GM12878 (cell line): ENCODE measurements at regions of chr12 and their contacts with region 1.

Region 1: GRCh38 chr12:92408072-92408900 is 262.6 kb upstream of the BTG1 start:
- DNase-seq: no peak
- ATAC-seq: peak; percentile 74
- H3K4me3 ChIP-seq: no peak overlapping the region
- H3K27ac ChIP-seq: peak overlapping the region; percentile 24
- H3K4me1 ChIP-seq: peaks cover 31% of the 10 kb centered on the region
- H3K27me3 ChIP-seq: no peaks in the 10 kb centered on the region
- CTCF ChIP-seq: peak; percentile 58 to 82 (median 72)
- EP300 ChIP-seq: no peak
- POLR2A ChIP-seq: no peak
- RAD21 ChIP-seq: peak; percentile 94

Region 2: GRCh38 chr12:91991399-91992187 is 416.7 kb before region 1 on chr12:
- CTCF ChIA-PET with region 1: interaction called, 3 read pairs
- POLR2A ChIA-PET with region 1: no interaction called
- RAD21 ChIA-PET with region 1: no interaction called
- SMC1A ChIA-PET with region 1: interaction called, 17 read pairs
- in situ Hi-C with region 1: no loop called
- intact Hi-C with region 1: no loop called
- DNase-seq: peak; percentile 32
- ATAC-seq: peak; percentile 94
- H3K4me3 ChIP-seq: no peak overlapping the region
- H3K27ac ChIP-seq: no peak overlapping the region
- H3K4me1 ChIP-seq: no peaks in the 10 kb centered on the region
- H3K27me3 ChIP-seq: no peaks in the 10 kb centered on the region
- CTCF ChIP-seq: peak in 2 of 3 experiments; percentile 35 to 56; a peak in 3 of 6 replicates
- EP300 ChIP-seq: no peak
- POLR2A ChIP-seq: no peak
- RAD21 ChIP-seq: peak; percentile 61

Region 3: DNA sequence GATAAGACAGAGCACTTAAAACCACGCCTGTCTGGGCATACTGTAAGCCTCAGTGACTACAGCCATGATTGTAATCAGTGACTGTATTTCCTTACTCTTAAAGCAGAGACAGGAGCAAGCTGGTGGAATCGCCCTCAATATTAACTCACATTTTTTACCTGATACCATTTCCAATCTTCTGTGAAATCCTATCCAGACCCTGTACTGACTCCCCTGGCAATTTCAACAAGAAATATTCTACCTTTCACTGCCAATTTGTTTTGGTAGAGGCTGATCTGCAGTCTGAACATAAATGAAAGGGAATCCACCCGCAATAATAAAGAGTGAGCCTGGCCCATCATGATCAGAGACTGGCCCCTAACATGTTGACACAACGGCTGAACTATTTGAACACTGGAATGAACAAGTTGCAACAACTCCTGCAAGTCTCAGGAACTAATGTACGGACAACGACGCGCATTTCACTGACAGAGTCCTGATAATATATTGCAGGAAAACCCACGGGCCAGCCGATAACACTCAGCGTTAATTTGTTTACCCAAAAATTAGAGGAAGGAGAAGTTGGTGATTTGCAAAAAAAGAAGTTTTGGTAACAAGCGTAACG is 67.1 kb before region 1 on chr12:
- CTCF ChIA-PET with region 1: no interaction called
- POLR2A ChIA-PET with region 1: no interaction called
- RAD21 ChIA-PET with region 1: no interaction called
- SMC1A ChIA-PET with region 1: interaction called, 12 read pairs
- in situ Hi-C with region 1: no loop called
- intact Hi-C with region 1: no loop called
- DNase-seq: no peak
- ATAC-seq: peak; percentile 86
- H3K4me3 ChIP-seq: peak overlapping the region; percentile 46; the same call in 1 of the 2 replicates
- H3K27ac ChIP-seq: no peak overlapping the region
- H3K4me1 ChIP-seq: no peaks in the 10 kb centered on the region
- H3K27me3 ChIP-seq: no peaks in the 10 kb centered on the region
- CTCF ChIP-seq: no peak
- EP300 ChIP-seq: no peak
- POLR2A ChIP-seq: no peak
- RAD21 ChIP-seq: no peak

Region 4: DNA sequence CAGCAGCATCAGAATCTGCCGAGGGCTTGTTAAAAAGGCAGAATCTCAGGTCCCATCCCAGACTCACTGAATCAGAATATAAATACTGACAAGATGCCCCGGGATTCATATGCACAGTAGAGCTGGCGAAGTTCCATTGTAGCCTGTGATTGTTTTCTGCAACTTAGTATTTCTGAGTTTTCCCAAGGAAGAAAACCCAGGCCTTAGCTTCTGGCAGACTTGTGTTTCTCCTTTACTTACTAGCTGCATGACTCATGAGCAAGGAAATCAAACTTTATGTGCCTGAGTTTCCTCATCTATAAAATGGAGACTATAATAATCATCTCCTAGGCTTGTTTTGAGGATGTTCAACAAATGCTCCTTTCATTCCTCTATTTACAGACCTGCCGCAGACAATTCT is 16.1 kb after region 1 on chr12:
- CTCF ChIA-PET with region 1: interaction called, 53 read pairs
- POLR2A ChIA-PET with region 1: interaction called, 4 read pairs
- RAD21 ChIA-PET with region 1: interaction called, 37 read pairs
- SMC1A ChIA-PET with region 1: interaction called, 145 read pairs
- in situ Hi-C with region 1: no loop called
- intact Hi-C with region 1: no loop called
- DNase-seq: no peak
- ATAC-seq: no peak
- H3K4me3 ChIP-seq: no peak overlapping the region
- H3K27ac ChIP-seq: no peak overlapping the region
- H3K4me1 ChIP-seq: peaks cover 17% of the 10 kb centered on the region; the same call in 1 of the 2 replicates
- H3K27me3 ChIP-seq: no peaks in the 10 kb centered on the region
- CTCF ChIP-seq: no peak
- EP300 ChIP-seq: no peak
- POLR2A ChIP-seq: no peak
- RAD21 ChIP-seq: no peak

Region 5: DNA sequence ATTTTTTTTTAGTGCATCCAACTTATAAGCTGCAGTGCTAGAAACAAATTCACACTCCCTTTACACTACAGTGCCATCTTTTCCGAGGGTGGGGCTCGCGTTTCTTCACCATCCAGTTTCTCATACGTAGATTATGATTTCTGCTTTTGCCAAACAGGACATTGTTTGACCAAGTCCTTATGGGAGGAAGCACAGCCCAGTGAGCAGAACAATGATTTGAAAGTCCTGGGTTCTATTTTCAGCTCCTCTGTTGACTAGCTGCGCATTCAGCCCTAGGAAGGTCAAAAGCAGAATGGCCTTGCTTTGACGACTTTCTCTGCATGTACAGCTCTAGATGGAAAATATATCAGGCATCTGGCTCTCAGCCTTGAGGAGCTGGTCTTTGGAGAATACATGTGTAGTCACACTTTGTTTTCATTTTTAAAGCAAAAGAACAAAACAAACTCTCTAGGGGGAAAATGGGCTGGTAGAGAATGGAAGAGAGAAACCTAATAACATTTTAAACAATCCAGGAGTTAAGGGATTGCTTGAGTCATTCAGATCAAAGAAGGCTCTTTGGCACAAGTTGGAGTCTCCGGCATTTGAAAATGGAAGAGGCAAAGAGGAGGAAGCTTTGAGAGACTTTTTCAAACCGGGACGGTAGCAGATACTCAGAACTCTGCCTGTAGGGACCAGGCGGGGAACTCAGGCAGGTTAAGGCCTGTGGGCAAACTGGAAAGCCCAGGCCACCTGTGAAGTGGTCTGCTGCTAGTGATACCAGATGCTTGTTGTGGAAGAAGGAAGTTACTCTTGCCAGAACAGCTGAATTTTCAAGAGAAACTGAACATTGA is 37.2 kb after region 1 on chr12:
- CTCF ChIA-PET with region 1: interaction called, 7 read pairs
- POLR2A ChIA-PET with region 1: interaction called, 5 read pairs
- RAD21 ChIA-PET with region 1: interaction called, 30 read pairs
- SMC1A ChIA-PET with region 1: interaction called, 41 read pairs
- in situ Hi-C with region 1: no loop called
- intact Hi-C with region 1: loop called (anchors 1 kb)
- DNase-seq: peak; percentile 97
- ATAC-seq: peak; percentile 90
- H3K4me3 ChIP-seq: peak overlapping the region; percentile 41
- H3K27ac ChIP-seq: peak overlapping the region; percentile 100
- H3K4me1 ChIP-seq: peaks cover 44% of the 10 kb centered on the region
- H3K27me3 ChIP-seq: no peaks in the 10 kb centered on the region
- CTCF ChIP-seq: no peak
- EP300 ChIP-seq: peak; percentile 89 to 91
- POLR2A ChIP-seq: peak; percentile 61
- RAD21 ChIP-seq: peak; percentile 32; the same call in 1 of the 2 replicates

Region 6: DNA sequence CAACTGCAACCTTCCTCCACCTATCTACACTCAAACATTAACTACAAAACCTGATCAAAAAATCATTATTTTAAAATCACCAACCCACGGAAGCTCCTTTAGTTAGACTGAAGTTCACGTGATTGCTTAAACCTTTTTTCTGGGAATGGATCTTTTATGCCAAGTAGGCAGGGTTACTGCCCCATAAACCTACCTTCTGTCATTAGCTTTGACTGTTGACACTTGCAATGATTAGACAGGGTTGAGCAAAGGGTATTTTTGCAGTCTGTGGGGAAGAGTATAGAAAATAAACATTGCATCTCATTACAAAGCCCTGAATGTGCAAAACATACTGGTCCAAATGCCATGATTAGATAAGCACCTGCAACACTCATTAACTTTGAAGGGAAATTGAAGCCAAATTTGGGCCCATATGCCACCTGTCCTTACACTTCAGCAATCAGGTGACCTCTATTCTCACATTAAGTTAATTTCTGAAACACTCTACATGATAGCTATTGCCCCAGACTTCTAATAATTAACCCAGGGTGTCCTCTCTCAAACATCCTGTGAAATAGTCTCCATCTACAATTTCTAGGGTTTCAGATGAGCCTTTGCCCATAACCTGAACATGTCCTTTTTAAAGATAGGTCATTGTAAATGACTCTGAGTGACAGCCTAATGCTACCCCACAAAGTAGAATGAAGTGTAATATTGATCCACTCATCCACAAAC is 138.5 kb after region 1 on chr12:
- CTCF ChIA-PET with region 1: no interaction called
- POLR2A ChIA-PET with region 1: interaction called, 5 read pairs
- RAD21 ChIA-PET with region 1: interaction called, 11 read pairs
- SMC1A ChIA-PET with region 1: interaction called, 15 read pairs
- in situ Hi-C with region 1: no loop called
- intact Hi-C with region 1: no loop called
- DNase-seq: no peak
- ATAC-seq: peak; percentile 60
- H3K4me3 ChIP-seq: no peak overlapping the region
- H3K27ac ChIP-seq: no peak overlapping the region
- H3K4me1 ChIP-seq: peaks cover 43% of the 10 kb centered on the region
- H3K27me3 ChIP-seq: no peaks in the 10 kb centered on the region
- CTCF ChIP-seq: no peak
- EP300 ChIP-seq: peak in 1 of 2 experiments; percentile 52; a peak in 2 of 4 replicates
- POLR2A ChIP-seq: no peak
- RAD21 ChIP-seq: no peak